K562 (cell line): ENCODE measurements at regions of chr3 and their contacts with region 1.

Region 1: GRCh38 chr3:101849051-101849720 is at the start of gene NFKBIZ:
- DNase-seq: peak; percentile 82 to 91 (median 86)
- ATAC-seq: peak; percentile 93
- H3K4me3 ChIP-seq: peak within 1 kb of the TSS; percentile 86
- H3K27ac ChIP-seq: peak within 1 kb of the TSS; percentile 81
- H3K4me1 ChIP-seq: peaks cover 8 to 10% of the 10 kb centered on the region in 2 experiments; a peak in 3 of 5 replicates
- H3K27me3 ChIP-seq: no peaks in the 10 kb centered on the region
- CTCF ChIP-seq: no peak
- EP300 ChIP-seq: no peak
- POLR2A ChIP-seq: peak; percentile 68; the same call in 1 of the 2 replicates
- RAD21 ChIP-seq: no peak
- polyA plus RNA-seq, gene NFKBIZ: 1.2 to 1.6 TPM

Region 2: DNA sequence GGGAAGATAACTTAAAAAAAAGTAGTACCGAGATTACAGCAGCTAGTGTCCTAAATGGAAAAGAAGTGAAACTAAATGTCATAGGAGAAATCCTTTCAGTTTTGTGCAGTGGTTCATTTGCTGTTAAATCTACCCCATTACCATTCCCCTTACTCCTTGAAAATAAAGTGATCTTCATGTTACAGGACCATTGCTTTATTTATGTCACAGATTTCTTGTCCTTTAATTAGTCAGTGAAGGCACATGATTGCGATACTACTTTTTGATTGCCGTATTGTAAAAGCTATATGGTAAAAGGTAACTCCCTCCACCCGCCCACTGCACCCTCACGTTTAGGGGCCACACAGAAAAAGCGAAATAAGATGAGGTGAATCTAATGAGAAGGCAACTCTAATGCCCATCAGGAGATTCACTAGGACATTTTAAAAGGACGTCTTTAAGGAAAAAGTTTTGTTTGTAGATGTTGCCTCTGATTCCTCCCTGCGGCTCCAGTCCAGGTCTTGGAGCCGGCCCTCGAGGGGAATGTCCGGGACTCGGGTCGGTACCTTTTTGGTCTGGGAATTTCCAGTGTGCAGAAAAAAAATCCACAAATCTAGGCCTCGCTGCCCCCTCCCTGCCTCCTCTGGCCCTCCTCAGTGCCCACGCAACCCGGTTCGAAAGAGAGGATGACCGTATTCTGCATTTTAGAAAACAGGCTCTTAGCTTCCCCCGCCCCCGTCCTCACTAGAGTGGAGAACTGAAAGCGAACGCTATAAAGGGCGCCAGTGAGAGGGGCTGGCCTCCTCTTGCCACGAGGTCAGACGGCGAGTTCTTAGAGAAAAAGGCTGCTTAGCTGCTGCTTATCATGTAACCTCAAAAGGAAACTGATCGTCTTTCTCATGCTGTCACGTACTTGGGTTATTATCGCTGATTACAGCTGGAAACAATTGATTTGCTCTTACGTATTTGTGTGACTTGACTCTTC is 21.7 kb before region 1 on chr3:
- CTCF ChIA-PET with region 1: no interaction called
- POLR2A ChIA-PET with region 1: interaction called, 16 read pairs
- in situ Hi-C with region 1: no loop called
- intact Hi-C with region 1: no loop called
- DNase-seq: peak; percentile 23 to 84 (median 40)
- ATAC-seq: peak; percentile 97
- H3K4me3 ChIP-seq: peak overlapping the region; percentile 21
- H3K27ac ChIP-seq: peak overlapping the region; percentile 56
- H3K4me1 ChIP-seq: peaks cover 3 to 5% of the 10 kb centered on the region in 2 experiments; a peak in 3 of 5 replicates
- H3K27me3 ChIP-seq: no peaks in the 10 kb centered on the region
- CTCF ChIP-seq: no peak
- EP300 ChIP-seq: peak; percentile 46; the same call in 1 of the 2 replicates
- POLR2A ChIP-seq: no peak; the same call in 1 of the 2 replicates
- RAD21 ChIP-seq: no peak

Region 3: GRCh38 chr3:102057781-102058421 is 208.7 kb after region 1 on chr3:
- CTCF ChIA-PET with region 1: no interaction called
- POLR2A ChIA-PET with region 1: no interaction called
- in situ Hi-C with region 1: no loop called
- intact Hi-C with region 1: no loop called
- DNase-seq: no peak
- ATAC-seq: no peak
- H3K4me3 ChIP-seq: no peak overlapping the region
- H3K27ac ChIP-seq: no peak overlapping the region
- H3K4me1 ChIP-seq: no peaks in the 10 kb centered on the region
- H3K27me3 ChIP-seq: no peaks in the 10 kb centered on the region
- CTCF ChIP-seq: no peak
- EP300 ChIP-seq: no peak
- POLR2A ChIP-seq: no peak
- RAD21 ChIP-seq: no peak